ENCODE measurements at regions of chr18 and their contacts with region 1.

Region 1: DNA sequence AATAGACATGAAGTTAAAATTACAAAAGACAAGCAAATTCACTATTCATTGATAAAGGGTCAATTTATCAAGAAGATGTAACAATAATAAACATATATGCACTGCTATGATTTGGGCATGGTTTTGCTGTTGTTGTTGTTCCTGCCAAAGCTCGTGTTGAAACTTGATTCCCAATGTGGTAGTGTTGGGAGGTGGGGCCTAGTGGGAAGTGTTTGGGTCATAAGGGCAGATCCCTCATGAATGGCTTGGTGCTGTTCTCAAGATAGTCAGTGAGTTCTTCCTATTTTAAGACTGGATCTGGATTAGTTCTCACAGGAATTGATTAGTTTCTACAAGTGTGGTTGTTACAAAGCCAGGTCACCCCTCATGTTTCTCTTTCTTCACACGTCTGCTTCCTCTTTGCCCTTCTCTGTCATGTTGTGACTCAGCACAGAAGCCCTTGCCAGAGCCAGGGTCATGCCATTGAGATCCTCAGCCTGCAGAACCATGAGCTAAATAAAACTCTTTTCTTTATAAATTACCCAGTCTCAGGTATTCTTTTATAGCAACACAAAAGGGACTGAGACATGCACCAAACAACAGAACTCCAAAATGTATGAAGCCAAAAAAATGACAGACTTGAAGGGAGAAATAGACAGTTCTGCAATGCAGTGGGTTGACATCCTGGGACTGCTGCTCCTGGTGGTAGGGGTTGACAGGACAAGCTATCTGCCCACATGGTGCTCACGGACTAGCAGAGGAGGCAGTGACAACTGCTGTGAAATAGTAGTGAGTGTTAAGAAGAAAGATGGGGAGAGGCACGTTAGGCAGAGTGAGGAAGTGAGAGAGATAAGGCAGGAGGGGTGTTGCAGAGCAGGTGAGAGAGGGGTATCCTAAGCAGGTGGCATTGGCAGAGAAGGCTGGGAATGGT is 18.6 kb upstream of the SKA1 start:
- DNase-seq: peak; percentile 34
- CTCF ChIP-seq: peak; percentile 30

Region 2: DNA sequence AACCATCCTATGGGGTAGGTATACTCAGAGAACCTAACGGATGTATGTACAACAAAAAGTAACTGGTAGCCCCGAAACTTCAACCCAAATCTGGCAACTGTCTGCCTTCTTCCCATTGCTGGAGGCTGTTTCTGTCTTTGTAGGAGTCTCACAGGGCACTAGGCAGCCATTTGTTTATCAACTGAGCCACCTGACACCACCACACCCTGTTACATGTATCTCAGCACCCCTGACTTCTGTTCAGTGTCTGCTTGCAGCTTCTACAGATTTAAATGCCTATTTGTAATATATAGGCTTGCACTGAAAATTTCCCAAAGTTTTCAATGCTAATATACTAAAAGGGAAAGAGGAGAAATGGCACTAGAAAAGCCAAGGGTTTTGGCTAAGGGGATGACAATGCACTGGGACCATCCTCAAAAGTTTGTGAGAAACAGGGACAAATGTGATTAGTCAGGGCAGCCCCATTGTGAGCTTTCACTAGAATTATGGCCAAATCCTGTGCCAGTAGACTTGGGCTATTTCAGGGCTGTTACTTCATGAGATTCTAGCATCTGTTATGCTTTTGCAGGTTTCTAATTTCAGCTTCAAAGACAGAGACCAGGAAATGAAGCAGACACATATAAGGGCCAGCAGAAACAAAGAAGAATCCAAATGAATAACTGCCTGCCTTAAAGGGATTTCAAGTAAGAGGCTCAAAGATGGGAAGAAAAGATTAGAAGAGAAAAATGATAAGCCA is 264.6 kb before region 1 on chr18:
- CTCF ChIA-PET with region 1: no interaction called
- POLR2A ChIA-PET with region 1: no interaction called
- DNase-seq: no peak
- CTCF ChIP-seq: no peak

Region 3: DNA sequence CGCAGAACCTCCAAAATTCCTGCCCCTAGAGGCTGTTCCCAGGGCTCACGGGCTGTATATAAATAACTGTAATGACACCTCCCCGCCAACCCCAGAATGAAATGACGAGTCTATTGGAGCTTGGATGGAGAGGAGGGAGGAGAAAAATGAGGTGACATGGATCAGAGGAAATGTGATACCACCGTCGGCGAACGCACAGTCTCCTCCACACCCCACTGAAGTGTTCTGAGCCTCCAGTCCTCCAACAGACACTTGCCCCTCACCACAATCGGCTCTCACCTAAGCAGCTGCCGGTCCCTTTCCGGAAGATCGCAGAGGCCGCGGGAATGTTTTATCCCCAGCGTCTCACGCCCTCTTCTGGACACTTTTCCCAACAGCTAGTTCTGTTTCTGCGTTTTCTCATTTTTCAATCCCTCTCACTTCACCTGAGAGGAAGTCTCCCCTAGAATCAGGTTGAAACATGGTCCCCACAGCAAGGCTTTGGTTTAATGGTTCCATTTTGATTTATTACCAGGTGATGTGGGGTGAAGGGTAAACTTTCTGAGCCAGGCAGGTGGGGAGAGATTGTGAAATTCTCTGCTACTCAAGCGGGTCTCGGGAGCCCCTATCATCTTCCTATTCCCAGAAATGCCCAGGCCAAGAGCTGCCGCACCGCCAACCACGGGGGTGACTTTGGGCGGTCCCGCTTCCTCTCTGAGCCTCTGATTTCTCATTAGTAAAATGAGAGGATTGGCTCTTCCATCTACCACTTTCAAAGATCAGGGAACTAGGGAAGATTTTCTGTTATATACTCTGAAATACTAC is 152.3 kb before region 1 on chr18:
- CTCF ChIA-PET with region 1: interaction called, 60 read pairs
- POLR2A ChIA-PET with region 1: no interaction called
- DNase-seq: peak; percentile 51
- CTCF ChIP-seq: peak; percentile 46

Region 4: DNA sequence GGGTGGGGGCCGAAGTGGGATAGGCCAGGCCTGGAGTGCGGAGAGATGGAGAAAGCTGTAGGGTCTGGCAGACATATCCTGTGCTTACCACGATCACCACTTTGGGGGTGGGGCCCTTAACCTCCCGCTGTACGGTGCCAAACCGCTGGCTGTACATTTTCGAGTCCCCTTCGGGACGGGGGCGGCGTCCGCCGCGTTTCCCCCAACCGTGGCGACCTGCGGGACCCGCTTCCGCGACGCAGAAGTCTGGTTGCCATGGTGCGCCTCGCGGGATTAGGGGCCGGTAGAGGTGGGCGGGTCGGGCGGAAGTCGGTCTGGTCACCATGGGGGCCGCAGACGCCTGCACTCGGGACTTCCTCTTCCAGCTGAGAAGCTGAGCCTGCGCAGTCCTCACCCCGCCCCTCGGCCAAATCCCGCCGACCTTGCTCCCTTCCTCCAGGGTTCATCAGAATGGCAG is 90.0 kb before region 1 on chr18 and contains the start of gene CFAP53:
- CTCF ChIA-PET with region 1: interaction called, 91 read pairs
- POLR2A ChIA-PET with region 1: no interaction called
- DNase-seq: peak; percentile 95
- CTCF ChIP-seq: no peak

Region 5: GRCh38 chr18:50287441-50288347 is 68.6 kb before region 1 on chr18 and contains the start of gene CXXC1:
- CTCF ChIA-PET with region 1: interaction called, 27 read pairs
- POLR2A ChIA-PET with region 1: no interaction called
- DNase-seq: peak; percentile 91
- CTCF ChIP-seq: peak; percentile 48

Region 6: GRCh38 chr18:50320719-50321118 is 35.6 kb before region 1 on chr18:
- CTCF ChIA-PET with region 1: interaction called, 17 read pairs
- POLR2A ChIA-PET with region 1: no interaction called
- DNase-seq: no peak
- CTCF ChIP-seq: no peak

Region 7: DNA sequence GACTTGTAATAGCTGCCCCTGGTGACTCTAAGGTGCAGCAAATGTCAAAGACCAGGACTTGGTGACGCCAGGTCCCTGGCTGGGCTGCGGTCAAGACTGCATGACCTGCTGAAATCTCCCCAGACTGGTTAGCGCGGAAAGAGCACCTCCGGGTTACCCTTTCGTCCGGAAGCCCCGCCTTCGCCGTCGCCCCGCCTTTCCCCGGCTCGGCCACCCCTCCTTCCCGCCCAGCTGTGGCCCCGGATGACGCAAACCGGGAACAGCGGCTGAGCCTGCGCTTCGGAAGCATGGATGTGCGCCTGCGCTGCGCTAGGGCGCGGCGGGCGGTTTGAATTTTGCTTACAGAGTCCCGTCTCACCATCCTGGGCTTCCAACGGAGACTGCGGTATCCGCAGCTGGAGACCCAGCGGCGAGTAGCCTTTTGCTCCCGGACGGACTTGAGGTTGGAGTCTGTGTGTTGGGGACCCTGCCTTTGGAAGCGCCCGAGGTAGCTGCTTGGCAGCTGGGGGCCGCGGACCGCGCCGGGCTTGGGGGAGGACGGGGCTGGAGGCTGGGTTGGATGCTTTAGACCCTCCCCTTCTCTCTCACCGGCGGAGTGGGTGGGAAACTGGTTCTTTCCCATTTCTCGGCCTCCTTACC is 18.6 kb after region 1 on chr18 and contains the start of gene SKA1:
- CTCF ChIA-PET with region 1: interaction called, 35 read pairs
- POLR2A ChIA-PET with region 1: no interaction called
- DNase-seq: peak; percentile 99
- CTCF ChIP-seq: no peak

Measured in GM10248 (cell line).